Dorsolateral prefrontal cortex (tissue), 120 donors: ENCODE measurements at regions of chr13 and their contacts with region 1.

Region 1: GRCh38 chr13:43804461-43805070 is 17.8 kb upstream of the ENOX1 start:
- DNase-seq: no peak
- H3K4me3 ChIP-seq: peak overlapping the region in 58 of 59 donors; percentile 3 to 68 (median 42)
- H3K27ac ChIP-seq: peak overlapping the region; percentile 16 to 100 (median 93)
- H3K27me3 ChIP-seq: no peaks in the 10 kb centered on the region
- CTCF ChIP-seq: peak; percentile 53 to 93 (median 75)

Region 2: DNA sequence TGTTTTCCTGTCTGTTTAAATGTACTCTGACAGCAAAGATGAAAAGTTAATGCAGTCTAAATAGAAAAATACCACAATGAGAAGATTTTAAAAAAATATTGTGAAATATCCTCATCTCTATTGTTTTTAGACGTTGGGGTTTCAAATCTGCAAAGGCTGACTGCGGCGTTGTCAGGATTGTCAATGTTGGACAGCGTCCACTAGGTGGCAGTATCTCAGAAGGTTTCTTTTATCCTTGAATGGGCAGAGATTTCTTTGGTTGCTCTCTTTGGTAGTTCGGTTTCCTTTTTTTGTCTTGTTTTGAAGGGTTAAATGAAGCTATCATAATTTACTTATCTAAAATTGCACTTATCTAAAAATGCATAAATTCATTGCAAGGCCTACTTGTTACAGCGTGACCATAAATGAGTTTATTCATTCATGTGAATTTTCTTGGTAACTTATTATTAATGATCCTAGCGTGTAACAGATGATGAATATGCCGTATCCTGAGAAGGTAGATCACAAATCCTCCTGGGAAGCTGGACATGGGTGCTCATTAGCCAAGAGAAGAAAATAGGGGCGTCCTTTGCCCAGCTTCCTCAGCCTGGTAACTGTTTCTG is 1209.5 kb before region 1 on chr13:
- intact Hi-C with region 1: loop called in 1 of 2 experiments (anchors 10 kb)
- DNase-seq: peak in 6 of 10 donors; percentile 32 to 63 (median 40)
- H3K4me3 ChIP-seq: no peak overlapping the region
- H3K27ac ChIP-seq: no peak overlapping the region
- H3K27me3 ChIP-seq: peaks cover 0 to 19% (median 0%) of the 10 kb centered on the region in 45 donors
- CTCF ChIP-seq: peak; percentile 78 to 95 (median 89)

Region 3: DNA sequence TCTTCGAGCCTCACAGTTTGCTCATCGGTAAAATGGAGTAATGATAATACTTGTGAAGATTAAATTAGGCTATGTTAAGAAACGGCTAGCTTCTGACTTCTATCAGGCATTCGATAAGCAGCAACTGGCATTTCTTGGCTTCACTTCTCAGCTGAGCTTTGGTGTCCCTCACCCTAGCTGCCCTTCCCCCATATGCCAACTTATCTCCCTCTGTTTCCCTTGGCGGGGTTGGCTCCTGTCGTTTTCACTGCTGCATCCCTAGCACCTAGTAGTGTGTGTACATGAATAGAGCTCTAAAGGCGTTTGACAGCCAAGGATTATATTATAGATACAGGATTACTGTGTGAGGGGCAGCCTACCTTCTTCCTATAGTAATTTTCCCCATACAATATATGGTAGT is 1133.1 kb before region 1 on chr13:
- intact Hi-C with region 1: no loop called
- DNase-seq: no peak
- H3K4me3 ChIP-seq: no peak overlapping the region
- H3K27ac ChIP-seq: no peak overlapping the region
- H3K27me3 ChIP-seq: peaks cover 0 to 7% (median 0%) of the 10 kb centered on the region in 45 donors
- CTCF ChIP-seq: no peak

Region 4: DNA sequence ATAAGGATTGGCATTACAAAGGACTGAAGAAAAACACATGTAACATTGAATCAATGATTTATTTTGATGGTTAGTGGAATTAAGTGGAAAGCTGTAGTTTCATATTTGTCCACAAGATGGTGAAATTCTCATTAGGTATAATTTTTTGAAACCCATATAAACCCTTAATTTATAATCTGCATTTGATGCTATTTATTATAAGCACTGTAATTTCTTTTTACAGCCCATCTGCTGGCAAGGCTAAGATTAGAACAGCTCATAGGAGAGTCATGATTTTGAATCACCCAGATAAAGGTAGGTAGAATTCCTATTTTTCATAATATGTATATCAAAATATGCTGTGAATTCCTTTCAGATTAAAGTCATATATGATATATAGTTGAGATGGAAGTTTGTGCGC is 719.0 kb before region 1 on chr13:
- intact Hi-C with region 1: loop called in 1 of 2 experiments (anchors 5 kb)
- DNase-seq: no peak
- H3K4me3 ChIP-seq: no peak overlapping the region
- H3K27ac ChIP-seq: peak overlapping the region in 2 of 59 donors; percentile 3 to 12
- H3K27me3 ChIP-seq: no peaks in the 10 kb centered on the region
- CTCF ChIP-seq: peak; percentile 59 to 92 (median 77)

Region 5: DNA sequence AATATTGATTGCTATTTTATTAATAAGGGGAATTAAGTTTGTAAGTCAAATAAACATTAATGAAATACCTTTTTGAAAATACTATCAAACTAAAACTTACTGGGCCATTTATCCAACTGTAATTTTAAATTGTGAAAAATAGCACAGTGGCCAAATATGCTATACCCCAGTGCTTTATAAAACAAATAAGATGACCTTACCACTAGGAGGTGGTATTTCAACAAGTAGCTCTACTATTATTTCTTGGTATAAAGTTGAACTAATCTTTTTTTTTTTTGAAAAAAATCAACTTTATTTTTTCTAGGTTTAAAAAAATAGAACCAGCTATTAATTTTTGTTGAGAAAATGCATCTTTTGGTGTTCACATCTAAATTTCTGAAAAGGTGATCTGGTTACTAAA is 89.9 kb after region 1 on chr13:
- intact Hi-C with region 1: no loop called
- DNase-seq: no peak
- H3K4me3 ChIP-seq: no peak overlapping the region
- H3K27ac ChIP-seq: peak overlapping the region in 2 of 59 donors; percentile 12 to 14
- H3K27me3 ChIP-seq: no peaks in the 10 kb centered on the region
- CTCF ChIP-seq: peak in 40 of 56 donors; percentile 6 to 56 (median 28)